Tibial artery (tissue), 4 donors: ENCODE measurements at regions of chr7 and their contacts with region 1.

Region 1: DNA sequence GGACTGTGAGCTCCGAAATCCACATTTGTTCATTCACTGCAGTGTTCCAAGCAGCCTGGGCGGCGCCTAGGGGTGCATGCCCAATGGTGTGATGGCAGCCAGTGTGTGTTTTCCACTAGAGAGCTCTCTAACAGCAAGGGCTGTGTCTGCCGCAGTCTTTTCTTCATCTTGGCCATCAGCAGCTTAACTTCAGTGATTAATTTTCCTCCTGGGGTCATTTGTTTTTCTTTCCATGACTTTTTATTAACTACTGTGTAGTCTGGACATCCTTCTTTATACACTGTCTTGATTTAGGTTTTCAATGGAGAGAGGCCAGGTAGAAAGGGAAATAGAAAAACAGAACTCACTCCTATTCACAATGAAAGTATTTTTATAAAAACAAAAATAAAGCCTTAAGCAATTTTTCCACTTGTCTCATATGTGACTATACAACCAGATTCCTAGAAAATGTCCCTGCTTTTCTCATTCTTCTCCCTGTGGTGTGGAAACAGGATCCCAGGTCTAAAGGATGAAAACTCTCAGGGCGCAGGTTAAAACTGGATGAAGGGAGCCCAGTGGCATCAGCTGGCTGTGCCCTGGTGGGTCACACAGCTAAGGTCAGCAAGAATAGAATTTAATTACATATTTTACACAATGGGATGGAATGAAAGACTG is 176.8 kb downstream of the PKD1L1 start:
- DNase-seq: peak; percentile 83 to 92
- H3K4me3 ChIP-seq: no peak overlapping the region
- H3K27ac ChIP-seq: peak overlapping the region; percentile 64 to 72
- H3K4me1 ChIP-seq: peaks cover 0 to 48% (median 14%) of the 10 kb centered on the region in 4 donors
- H3K27me3 ChIP-seq: no peaks in the 10 kb centered on the region
- CTCF ChIP-seq: peak; percentile 35 to 37

Region 2: GRCh38 chr7:47581806-47582763 is 189.4 kb before region 1 on chr7 and contains the start of gene TNS3:
- intact Hi-C with region 1: loop called (anchors 10 kb)
- DNase-seq: peak in 1 of 2 donors; percentile 81
- H3K4me3 ChIP-seq: peak within 1 kb of the TSS; percentile 72
- H3K27ac ChIP-seq: peak within 1 kb of the TSS; percentile 88 to 89
- H3K4me1 ChIP-seq: peaks cover 0 to 84% (median 62%) of the 10 kb centered on the region in 4 donors
- H3K27me3 ChIP-seq: no peaks in the 10 kb centered on the region
- CTCF ChIP-seq: peak; percentile 14 to 51

Region 3: GRCh38 chr7:48365010-48365409 is 593.5 kb after region 1 on chr7:
- intact Hi-C with region 1: no loop called
- DNase-seq: no peak
- H3K4me3 ChIP-seq: no peak overlapping the region
- H3K27ac ChIP-seq: no peak overlapping the region
- H3K4me1 ChIP-seq: no peaks in the 10 kb centered on the region
- H3K27me3 ChIP-seq: no peaks in the 10 kb centered on the region
- CTCF ChIP-seq: no peak